Activated CD8-positive, alpha-beta memory T cell treated with anti-CD3 and anti-CD28 coated beads, Interleukin-2, amount 10 ng/mL, durations not matched to agents 7 days and 5 days (primary cell): ENCODE measurements at regions of chr2 and their contacts with region 1.

Region 1: DNA sequence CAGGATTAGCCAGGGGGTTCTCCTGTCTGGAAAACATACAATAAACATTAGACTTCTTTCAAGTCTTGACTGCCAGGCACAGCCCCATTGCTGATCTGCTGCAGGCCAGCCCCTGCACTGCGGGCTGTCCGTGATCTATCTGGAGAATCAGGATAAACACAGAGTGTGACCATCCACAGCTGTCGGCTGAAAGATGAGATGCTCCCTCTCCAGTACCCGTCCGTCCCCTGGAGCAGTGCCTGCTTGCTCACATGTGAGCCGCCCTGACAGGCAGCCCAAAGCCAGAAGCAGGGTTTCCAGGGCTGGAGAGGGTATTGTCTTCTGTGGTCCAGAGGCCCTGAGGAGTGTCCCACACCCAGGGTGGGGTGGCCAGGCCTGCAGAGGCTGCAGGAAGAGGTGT is 46.1 kb upstream of the FOSL2 start:
- DNase-seq: no peak
- ATAC-seq: no peak
- H3K4me3 Mint-ChIP-seq: no peak overlapping the region
- H3K27ac Mint-ChIP-seq: peak overlapping the region; percentile 14
- H3K4me1 Mint-ChIP-seq: peaks cover 28% of the 10 kb centered on the region
- H3K27me3 Mint-ChIP-seq: no peaks in the 10 kb centered on the region

Region 2: GRCh38 chr2:28359222-28360065 is 12.9 kb after region 1 on chr2:
- CTCF ChIA-PET with region 1: interaction called, 11 read pairs
- DNase-seq: peak; percentile 96
- ATAC-seq: peak; percentile 81
- H3K4me3 Mint-ChIP-seq: peak overlapping the region; percentile 44
- H3K27ac Mint-ChIP-seq: peak overlapping the region; percentile 94
- H3K4me1 Mint-ChIP-seq: peaks cover 56% of the 10 kb centered on the region
- H3K27me3 Mint-ChIP-seq: no peaks in the 10 kb centered on the region